ENCODE measurements at regions of chr1 and their contacts with region 1.

Region 1: DNA sequence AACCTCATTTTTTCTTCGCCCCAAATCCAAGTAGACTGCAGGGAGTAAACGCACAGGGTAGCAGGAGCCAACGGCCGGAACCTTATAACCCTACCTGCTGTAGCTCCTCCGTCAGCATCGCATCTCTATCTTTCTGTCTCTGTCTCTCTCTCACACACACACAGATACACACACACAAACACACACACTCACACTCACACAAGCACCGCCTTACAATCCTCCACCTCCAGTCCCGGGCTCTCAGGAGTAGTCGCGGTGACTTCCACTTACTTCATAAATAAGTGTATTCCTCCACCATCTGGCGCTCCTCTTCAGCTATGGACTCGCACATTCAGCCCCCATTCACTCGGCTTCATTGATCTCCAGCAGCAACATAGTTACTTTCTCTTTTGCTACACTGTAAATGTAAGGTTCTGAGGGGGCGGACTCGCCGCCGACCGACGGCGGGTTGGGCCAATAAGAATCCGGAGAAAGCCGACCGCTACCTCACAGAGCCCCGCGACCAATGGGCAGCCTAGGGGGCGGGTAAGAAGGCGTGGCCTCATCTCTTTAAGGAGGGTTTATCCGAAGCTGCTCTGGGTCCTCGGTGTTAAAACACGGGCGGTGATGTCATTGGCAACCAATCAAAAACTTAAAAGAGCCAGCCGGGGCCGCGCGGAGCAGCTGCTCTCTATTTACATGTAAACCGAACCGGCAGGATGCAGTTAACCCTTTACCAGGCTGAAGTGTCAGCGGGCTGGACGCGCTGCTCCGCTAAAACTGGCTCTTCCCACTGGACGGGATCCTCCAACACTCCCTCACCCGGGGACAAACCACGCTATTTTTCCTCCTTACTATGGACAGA is at the start of gene DUSP10:
- DNase-seq: peak; percentile 100
- ATAC-seq: peak; percentile 84
- H3K4me3 Mint-ChIP-seq: no peak within 1 kb of the TSS
- H3K27ac Mint-ChIP-seq: no peak within 1 kb of the TSS
- H3K4me1 Mint-ChIP-seq: peaks cover 15% of the 10 kb centered on the region
- H3K27me3 Mint-ChIP-seq: no peaks in the 10 kb centered on the region
- total RNA-seq, gene DUSP10: 12.1 to 13.0 TPM

Region 2: GRCh38 chr1:221543529-221544120 is 198.3 kb before region 1 on chr1:
- CTCF ChIA-PET with region 1: interaction called, 18 read pairs
- POLR2A ChIA-PET with region 1: no interaction called
- DNase-seq: no peak
- ATAC-seq: no peak
- H3K4me3 Mint-ChIP-seq: no peak overlapping the region
- H3K27ac Mint-ChIP-seq: no peak overlapping the region
- H3K4me1 Mint-ChIP-seq: no peaks in the 10 kb centered on the region
- H3K27me3 Mint-ChIP-seq: peaks cover 21% of the 10 kb centered on the region

Region 3: DNA sequence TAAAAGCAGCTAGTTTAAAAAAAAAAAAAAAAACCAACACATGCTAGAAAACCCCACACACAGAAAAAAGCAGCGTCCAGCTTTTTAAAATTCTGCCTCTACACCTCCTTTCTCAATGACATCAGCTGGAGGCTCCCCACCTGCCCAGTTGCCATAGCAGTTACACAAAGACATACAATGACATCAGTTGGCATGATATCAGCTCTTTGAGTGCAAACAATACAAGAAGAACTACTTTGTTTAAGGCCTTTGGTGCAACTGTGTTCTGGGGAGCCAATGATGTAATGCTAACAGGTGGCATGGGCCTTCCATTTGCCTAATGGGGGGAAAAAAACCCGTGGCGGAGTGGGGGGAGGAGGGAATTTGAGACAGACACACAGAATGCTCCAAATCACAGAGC is 32.9 kb before region 1 on chr1:
- CTCF ChIA-PET with region 1: interaction called, 56 read pairs
- POLR2A ChIA-PET with region 1: interaction called, 268 read pairs
- DNase-seq: peak; percentile 60
- ATAC-seq: peak; percentile 27
- H3K4me3 Mint-ChIP-seq: no peak overlapping the region
- H3K27ac Mint-ChIP-seq: peak overlapping the region; percentile 78
- H3K4me1 Mint-ChIP-seq: peaks cover 76% of the 10 kb centered on the region
- H3K27me3 Mint-ChIP-seq: no peaks in the 10 kb centered on the region

Region 4: GRCh38 chr1:221761354-221762002 is 19.5 kb after region 1 on chr1:
- CTCF ChIA-PET with region 1: interaction called, 18 read pairs
- POLR2A ChIA-PET with region 1: interaction called, 5 read pairs
- DNase-seq: no peak
- ATAC-seq: no peak
- H3K4me3 Mint-ChIP-seq: no peak overlapping the region
- H3K27ac Mint-ChIP-seq: no peak overlapping the region
- H3K4me1 Mint-ChIP-seq: peaks cover 48% of the 10 kb centered on the region
- H3K27me3 Mint-ChIP-seq: no peaks in the 10 kb centered on the region

Region 5: DNA sequence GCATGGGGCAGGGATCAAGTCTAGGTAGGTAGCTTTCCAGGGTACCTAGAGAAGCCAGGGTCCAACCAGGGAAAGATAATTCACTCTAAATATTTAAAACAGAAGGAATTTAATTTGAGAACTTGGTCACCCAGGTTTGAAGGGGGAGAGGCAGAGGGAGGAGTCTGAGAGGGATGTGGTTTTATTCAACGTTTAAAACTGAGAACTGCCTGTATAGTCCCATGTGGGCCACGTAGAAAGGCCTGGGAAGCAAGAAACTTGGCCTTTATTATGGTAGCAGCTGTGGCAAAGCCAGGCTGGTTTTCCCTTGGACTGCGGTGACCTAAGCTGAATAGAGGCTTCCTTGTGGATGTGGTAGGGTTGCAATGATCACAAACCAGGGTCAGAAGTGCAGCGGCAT is 42.0 kb after region 1 on chr1:
- CTCF ChIA-PET with region 1: interaction called, 15 read pairs
- POLR2A ChIA-PET with region 1: interaction called, 46 read pairs
- DNase-seq: peak; percentile 44
- ATAC-seq: peak; percentile 70
- H3K4me3 Mint-ChIP-seq: peak overlapping the region; percentile 60
- H3K27ac Mint-ChIP-seq: peak overlapping the region; percentile 53
- H3K4me1 Mint-ChIP-seq: peaks cover 67% of the 10 kb centered on the region
- H3K27me3 Mint-ChIP-seq: no peaks in the 10 kb centered on the region

Region 6: DNA sequence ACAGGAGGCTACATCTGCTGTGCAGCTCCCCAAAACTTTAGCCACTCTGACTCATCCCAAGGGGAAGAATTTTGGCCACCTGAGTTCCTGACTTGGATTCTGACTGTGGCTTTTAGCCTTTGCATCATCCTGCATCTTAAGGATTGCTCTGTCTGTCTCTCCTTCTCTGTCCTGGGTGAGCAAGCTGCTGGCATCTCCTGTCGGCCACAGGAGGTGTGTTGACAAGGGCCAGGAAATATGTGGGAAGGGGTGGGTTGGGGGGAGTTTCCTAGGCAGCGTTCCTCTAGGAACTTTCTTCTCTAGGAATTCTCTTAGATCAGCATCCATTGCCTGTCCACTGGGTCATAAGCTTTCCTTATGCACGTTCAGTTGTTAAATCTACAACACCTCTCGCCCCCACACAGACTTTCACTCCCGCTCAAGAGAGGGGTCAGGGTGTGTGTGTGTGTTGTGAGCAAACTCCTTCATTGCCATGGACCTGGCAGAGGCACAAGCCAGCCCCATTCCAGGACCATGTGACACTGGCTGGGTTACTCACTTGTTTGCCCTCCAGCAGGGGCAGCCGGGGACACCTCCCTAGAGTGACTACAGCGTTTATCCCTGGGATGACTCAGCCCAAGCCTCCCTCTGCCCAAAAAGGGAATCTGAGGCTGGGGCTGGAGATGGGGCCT is 144.9 kb after region 1 on chr1:
- CTCF ChIA-PET with region 1: no interaction called
- POLR2A ChIA-PET with region 1: no interaction called
- DNase-seq: no peak
- ATAC-seq: no peak
- H3K4me3 Mint-ChIP-seq: no peak overlapping the region
- H3K27ac Mint-ChIP-seq: no peak overlapping the region
- H3K4me1 Mint-ChIP-seq: no peaks in the 10 kb centered on the region
- H3K27me3 Mint-ChIP-seq: peaks cover 11% of the 10 kb centered on the region

Region 7: DNA sequence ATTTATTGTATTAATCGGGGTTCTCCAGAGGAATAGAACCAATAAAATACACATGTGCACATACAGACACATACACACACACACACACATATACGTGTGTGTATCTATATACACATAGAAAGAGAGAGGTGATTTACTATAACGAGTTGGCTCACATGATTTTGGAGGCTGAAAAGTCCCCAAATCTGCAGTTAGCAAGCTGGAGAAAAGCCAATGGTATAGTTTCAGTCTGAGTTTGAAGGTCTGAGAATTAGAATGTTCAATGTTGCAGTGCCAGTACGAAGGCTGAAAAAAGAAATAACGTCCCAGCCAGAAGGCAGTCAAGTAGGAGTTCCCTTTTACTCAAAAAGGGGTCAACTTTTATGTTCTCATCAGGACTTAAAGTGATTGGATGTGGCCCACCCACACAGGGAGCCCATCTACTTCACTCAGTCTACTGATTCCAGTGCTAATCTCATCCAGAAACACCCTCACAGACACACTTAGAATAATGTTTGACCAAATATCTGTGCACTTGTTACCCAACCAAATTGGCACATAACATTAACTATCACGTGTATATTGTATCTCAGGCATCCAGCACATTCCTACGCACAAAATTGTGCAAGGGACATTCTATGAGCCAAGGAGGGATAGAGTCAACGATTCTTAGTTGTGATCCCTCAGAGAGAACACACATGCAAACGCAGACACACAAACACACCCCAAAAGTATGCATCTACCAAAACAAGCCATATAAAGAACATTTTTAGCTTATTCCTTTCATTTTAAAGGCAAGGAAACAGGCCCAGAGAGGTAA is 195.4 kb after region 1 on chr1:
- CTCF ChIA-PET with region 1: no interaction called
- POLR2A ChIA-PET with region 1: no interaction called
- DNase-seq: no peak
- ATAC-seq: no peak
- H3K4me3 Mint-ChIP-seq: no peak overlapping the region
- H3K27ac Mint-ChIP-seq: no peak overlapping the region
- H3K4me1 Mint-ChIP-seq: no peaks in the 10 kb centered on the region
- H3K27me3 Mint-ChIP-seq: peaks cover 7% of the 10 kb centered on the region

Region 8: GRCh38 chr1:221961532-221962292 is 219.8 kb after region 1 on chr1:
- CTCF ChIA-PET with region 1: interaction called, 5 read pairs
- POLR2A ChIA-PET with region 1: interaction called, 15 read pairs
- DNase-seq: peak; percentile 78
- ATAC-seq: peak; percentile 98
- H3K4me3 Mint-ChIP-seq: peak overlapping the region; percentile 22
- H3K27ac Mint-ChIP-seq: no peak overlapping the region
- H3K4me1 Mint-ChIP-seq: peaks cover 21% of the 10 kb centered on the region
- H3K27me3 Mint-ChIP-seq: no peaks in the 10 kb centered on the region

Region 9: DNA sequence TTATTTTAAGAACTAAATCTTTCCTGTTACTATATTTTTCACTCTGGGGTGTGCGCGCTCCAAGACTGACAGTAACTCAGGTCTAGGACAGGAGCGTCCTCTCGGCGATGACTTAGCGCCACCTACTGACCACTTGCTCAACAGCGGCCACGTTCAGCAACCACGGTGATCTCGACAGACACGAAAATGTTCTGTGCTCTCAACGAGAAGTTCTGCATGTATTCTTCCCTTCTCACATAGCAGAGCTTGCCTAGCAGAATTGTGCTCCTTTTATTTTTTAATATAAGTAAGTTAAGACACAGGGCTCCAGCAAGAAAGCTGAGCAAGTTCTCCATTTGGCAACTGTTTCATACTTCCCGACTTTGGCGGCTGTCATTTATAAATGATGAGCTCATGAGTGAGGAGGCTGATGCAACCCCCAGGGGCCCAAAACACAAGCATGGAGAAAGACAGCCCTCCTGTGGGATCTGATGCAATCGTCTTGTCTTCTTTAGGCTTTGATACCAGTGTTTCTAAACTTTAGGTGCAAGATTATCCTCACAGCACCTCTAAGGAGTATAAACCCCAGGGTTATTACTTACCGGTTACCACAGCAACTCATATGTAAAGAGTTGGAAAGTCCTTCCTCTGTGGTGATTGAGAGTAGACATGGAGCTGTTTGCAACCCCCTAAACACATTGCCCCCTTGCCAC is 713.4 kb after region 1 on chr1:
- CTCF ChIA-PET with region 1: interaction called, 17 read pairs
- POLR2A ChIA-PET with region 1: interaction called, 9 read pairs
- DNase-seq: peak; percentile 87
- ATAC-seq: peak; percentile 98
- H3K4me3 Mint-ChIP-seq: no peak overlapping the region
- H3K27ac Mint-ChIP-seq: no peak overlapping the region
- H3K4me1 Mint-ChIP-seq: peaks cover 6% of the 10 kb centered on the region
- H3K27me3 Mint-ChIP-seq: no peaks in the 10 kb centered on the region

Measured in activated CD8-positive, alpha-beta T cell treated with anti-CD3 and anti-CD28 coated beads, Interleukin-2, amount 10 ng/mL, durations not matched to agents 7 days and 5 days (primary cell).